ENCODE measurements at regions of chr6 and their contacts with region 1.

Region 1: DNA sequence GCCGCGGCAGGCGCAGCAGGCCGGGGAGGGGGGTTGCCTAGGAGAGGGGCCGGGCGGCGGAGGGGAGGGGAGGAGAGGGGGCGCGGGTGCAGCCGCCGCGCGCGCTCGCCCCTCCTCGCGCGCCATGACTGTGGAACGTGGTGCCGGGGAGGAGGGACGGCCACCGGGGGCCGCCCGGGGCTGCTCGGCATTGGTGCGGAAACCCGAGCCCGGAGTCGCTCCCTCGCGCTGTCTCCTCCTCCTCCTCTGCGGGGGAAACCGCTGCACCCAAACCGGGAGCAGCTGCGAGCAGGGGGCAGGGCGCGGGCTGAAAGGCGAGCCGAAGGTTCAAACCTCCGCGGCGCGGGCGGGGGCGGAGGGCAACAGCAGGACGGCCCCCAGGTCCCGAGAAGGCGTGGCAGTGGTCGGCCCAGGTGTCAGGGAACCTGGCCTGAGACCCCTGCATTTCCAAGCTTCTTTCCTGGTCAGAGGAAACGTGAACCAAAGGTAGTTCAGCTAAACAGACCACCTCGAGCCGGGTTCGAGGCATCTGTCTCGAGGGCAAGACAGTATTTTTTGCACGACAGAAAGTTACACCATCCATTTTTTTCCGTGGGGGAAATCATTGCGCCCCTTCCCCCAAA is 1.4 kb upstream of the TRERF1 start:
- DNase-seq: peak; percentile 47 to 80 (median 78)
- ATAC-seq: peak; percentile 85
- H3K4me3 ChIP-seq: peak overlapping the region; percentile 80
- H3K4me3 Mint-ChIP-seq: peak overlapping the region; percentile 84 to 100 (median 96)
- H3K27ac ChIP-seq: peak overlapping the region; percentile 56
- H3K27ac Mint-ChIP-seq: peak overlapping the region in 8 of 9 donors; percentile 11 to 93 (median 72)
- H3K4me1 ChIP-seq: peaks cover 4 to 20% of the 10 kb centered on the region in 2 donors
- H3K4me1 Mint-ChIP-seq: peaks cover 25 to 41% (median 33%) of the 10 kb centered on the region in 7 donors
- H3K27me3 ChIP-seq: no peaks in the 10 kb centered on the region
- H3K27me3 Mint-ChIP-seq: peaks cover 0 to 11% (median 0%) of the 10 kb centered on the region in 5 donors

Region 2: GRCh38 chr6:41638002-41638934 is 814.9 kb before region 1 on chr6 and contains the start of gene MDFI:
- CTCF ChIA-PET with region 1: no interaction called
- POLR2A ChIA-PET with region 1: no interaction called
- intact Hi-C with region 1: no loop called
- DNase-seq: no peak
- ATAC-seq: no peak
- H3K4me3 ChIP-seq: no peak within 1 kb of the TSS
- H3K4me3 Mint-ChIP-seq: peak within 1 kb of the TSS in 9 of 10 donors; percentile 49 to 79 (median 71)
- H3K27ac ChIP-seq: no peak within 1 kb of the TSS
- H3K27ac Mint-ChIP-seq: no peak within 1 kb of the TSS
- H3K4me1 ChIP-seq: peaks cover 3 to 10% of the 10 kb centered on the region in 2 donors
- H3K4me1 Mint-ChIP-seq: peaks cover 0 to 15% (median 10%) of the 10 kb centered on the region in 7 donors
- H3K27me3 ChIP-seq: peaks cover 0 to 7% of the 10 kb centered on the region in 2 donors
- H3K27me3 Mint-ChIP-seq: peaks cover 46 to 75% (median 59%) of the 10 kb centered on the region in 5 donors
- total RNA-seq, gene MDFI: not detected

Region 3: GRCh38 chr6:41735427-41736356 is 717.5 kb before region 1 on chr6 and contains the start of gene TFEB:
- CTCF ChIA-PET with region 1: no interaction called
- POLR2A ChIA-PET with region 1: no interaction called
- intact Hi-C with region 1: loop called in 1 of 2 experiments (anchors 2 kb)
- DNase-seq: peak; percentile 88 to 98 (median 93)
- ATAC-seq: peak; percentile 87
- H3K4me3 ChIP-seq: peak within 1 kb of the TSS; percentile 57
- H3K4me3 Mint-ChIP-seq: peak within 1 kb of the TSS; percentile 66 to 89 (median 80)
- H3K27ac ChIP-seq: peak within 1 kb of the TSS; percentile 80
- H3K27ac Mint-ChIP-seq: peak within 1 kb of the TSS in 8 of 9 donors; percentile 34 to 84 (median 62)
- H3K4me1 ChIP-seq: peaks cover 32 to 37% of the 10 kb centered on the region in 2 donors
- H3K4me1 Mint-ChIP-seq: peaks cover 13 to 32% (median 24%) of the 10 kb centered on the region in 7 donors
- H3K27me3 ChIP-seq: no peaks in the 10 kb centered on the region
- H3K27me3 Mint-ChIP-seq: no peaks in the 10 kb centered on the region
- total RNA-seq, gene TFEB: 7.4 to 39.9 (median 11.8) TPM

Region 4: DNA sequence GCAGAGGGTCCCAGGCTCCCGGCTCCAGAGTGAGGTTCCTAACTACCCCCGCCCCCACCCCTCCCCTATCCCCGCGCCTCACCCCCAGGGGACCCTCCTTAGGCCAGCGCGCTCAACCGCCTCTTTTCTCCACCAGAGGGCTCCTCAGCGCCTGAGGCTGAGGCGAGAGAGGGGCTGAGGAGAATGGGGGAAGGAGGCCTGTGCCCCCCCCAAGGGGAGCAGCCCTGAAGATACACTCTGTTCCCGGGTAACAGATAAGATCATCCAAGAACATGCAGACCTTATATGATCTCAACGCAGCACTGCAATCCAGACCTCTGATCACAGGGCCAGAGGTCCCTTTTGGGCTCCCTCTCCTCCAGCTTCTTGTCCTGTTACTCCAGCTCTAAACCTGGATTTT is 192.2 kb before region 1 on chr6:
- CTCF ChIA-PET with region 1: no interaction called
- POLR2A ChIA-PET with region 1: interaction called, 3 read pairs
- intact Hi-C with region 1: loop called (anchors 2 kb)
- DNase-seq: peak in 6 of 9 donors; percentile 11 to 42 (median 34)
- ATAC-seq: peak; percentile 71
- H3K4me3 ChIP-seq: no peak overlapping the region
- H3K4me3 Mint-ChIP-seq: no peak overlapping the region
- H3K27ac ChIP-seq: no peak overlapping the region
- H3K27ac Mint-ChIP-seq: peak overlapping the region in 2 of 9 donors; percentile 38 to 60
- H3K4me1 ChIP-seq: peaks cover 0 to 7% of the 10 kb centered on the region in 2 donors
- H3K4me1 Mint-ChIP-seq: peaks cover 0 to 14% (median 4%) of the 10 kb centered on the region in 7 donors
- H3K27me3 ChIP-seq: no peaks in the 10 kb centered on the region
- H3K27me3 Mint-ChIP-seq: no peaks in the 10 kb centered on the region

Region 5: DNA sequence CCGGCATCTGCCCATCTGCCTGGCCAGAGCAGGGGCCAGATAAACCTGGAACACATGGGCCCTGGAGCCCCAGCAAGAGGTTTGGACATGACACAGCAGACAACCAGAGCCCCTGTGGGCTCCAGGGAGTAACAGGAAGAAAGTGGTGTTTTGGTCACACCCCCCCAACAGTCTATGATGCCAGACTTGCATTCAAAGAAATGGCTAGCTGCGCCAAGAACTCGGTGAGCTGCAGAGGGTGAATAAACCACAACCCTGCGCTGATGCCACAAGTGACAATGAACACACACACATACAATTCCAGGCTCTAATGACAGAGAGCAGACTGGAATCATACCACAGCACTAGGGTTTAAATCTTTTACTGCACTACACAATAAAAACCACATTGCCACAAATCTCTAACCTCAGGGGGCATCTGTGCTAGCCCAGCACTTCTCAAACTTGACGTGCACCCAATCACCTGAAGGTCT is 35.5 kb before region 1 on chr6:
- CTCF ChIA-PET with region 1: no interaction called
- POLR2A ChIA-PET with region 1: interaction called, 21 read pairs
- intact Hi-C with region 1: loop called (anchors 2 to 5 kb)
- DNase-seq: peak in 6 of 9 donors; percentile 16 to 40 (median 30)
- ATAC-seq: peak; percentile 86
- H3K4me3 ChIP-seq: peak overlapping the region; percentile 29
- H3K4me3 Mint-ChIP-seq: peak overlapping the region in 9 of 10 donors; percentile 43 to 75 (median 62)
- H3K27ac ChIP-seq: no peak overlapping the region
- H3K27ac Mint-ChIP-seq: peak overlapping the region in 6 of 9 donors; percentile 68 to 84 (median 77)
- H3K4me1 ChIP-seq: peaks cover 26 to 29% of the 10 kb centered on the region in 2 donors
- H3K4me1 Mint-ChIP-seq: peaks cover 43 to 91% (median 75%) of the 10 kb centered on the region in 7 donors
- H3K27me3 ChIP-seq: no peaks in the 10 kb centered on the region
- H3K27me3 Mint-ChIP-seq: no peaks in the 10 kb centered on the region

Region 6: GRCh38 chr6:42440778-42441696 is 12.1 kb before region 1 on chr6:
- CTCF ChIA-PET with region 1: interaction called, 8 read pairs
- POLR2A ChIA-PET with region 1: interaction called, 46 read pairs
- intact Hi-C with region 1: loop called in 1 of 2 experiments (anchors 1 kb)
- DNase-seq: no peak
- ATAC-seq: no peak
- H3K4me3 ChIP-seq: no peak overlapping the region
- H3K4me3 Mint-ChIP-seq: peak overlapping the region in 7 of 10 donors; percentile 2 to 61 (median 54)
- H3K27ac ChIP-seq: no peak overlapping the region
- H3K27ac Mint-ChIP-seq: peak overlapping the region in 8 of 9 donors; percentile 16 to 86 (median 65)
- H3K4me1 ChIP-seq: peaks cover 32 to 35% of the 10 kb centered on the region in 2 donors
- H3K4me1 Mint-ChIP-seq: peaks cover 24 to 81% (median 68%) of the 10 kb centered on the region in 7 donors
- H3K27me3 ChIP-seq: no peaks in the 10 kb centered on the region
- H3K27me3 Mint-ChIP-seq: no peaks in the 10 kb centered on the region

Region 7: DNA sequence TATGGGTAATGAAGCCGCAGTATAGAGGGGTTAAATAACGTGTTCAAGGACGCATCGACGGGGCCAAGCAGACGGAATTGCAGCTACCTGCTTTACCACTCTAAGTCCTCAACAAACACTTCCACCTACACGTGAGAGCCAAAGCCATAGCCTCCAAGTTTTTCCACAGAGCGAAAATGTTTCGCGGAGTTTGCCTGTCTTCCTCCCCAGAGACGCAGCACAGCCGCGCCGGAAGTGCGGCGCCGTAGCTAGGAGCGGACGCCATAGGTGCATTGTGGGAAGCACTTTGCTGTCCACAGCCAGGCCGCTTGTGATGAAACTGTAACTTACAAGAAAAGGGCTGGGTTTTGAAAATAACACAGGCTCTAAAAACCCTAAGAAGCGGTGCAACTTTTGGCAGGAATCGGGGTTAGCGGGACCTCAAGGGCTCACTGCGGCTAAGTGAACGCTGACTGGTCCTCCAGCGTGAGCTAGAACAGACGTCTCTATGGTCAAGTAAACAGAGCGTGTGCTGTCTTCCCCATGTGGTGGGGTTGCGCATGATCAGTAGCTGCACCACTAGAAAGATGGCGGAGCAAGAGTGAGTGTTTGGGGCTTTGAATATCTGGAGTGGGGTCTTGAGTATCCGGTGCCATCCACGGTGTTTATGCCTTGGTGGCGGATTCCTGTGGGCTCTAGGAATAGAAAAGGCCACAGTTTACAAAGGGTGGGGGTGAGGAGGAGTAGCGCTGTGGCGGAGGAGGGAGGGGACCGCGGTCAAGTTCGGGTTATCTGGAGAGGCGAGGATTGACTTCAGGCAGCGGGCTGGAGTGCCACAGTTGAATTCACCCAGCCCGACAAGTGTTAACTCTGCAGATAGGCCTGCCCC is 426.5 kb after region 1 on chr6 and contains the start of gene RPL7L1:
- CTCF ChIA-PET with region 1: no interaction called
- POLR2A ChIA-PET with region 1: no interaction called
- intact Hi-C with region 1: loop called in 1 of 2 experiments (anchors 5 kb)
- DNase-seq: peak; percentile 70 to 93 (median 88)
- ATAC-seq: peak; percentile 95
- H3K4me3 ChIP-seq: peak within 1 kb of the TSS; percentile 82
- H3K4me3 Mint-ChIP-seq: peak within 1 kb of the TSS; percentile 93 to 99 (median 96)
- H3K27ac ChIP-seq: peak within 1 kb of the TSS; percentile 89
- H3K27ac Mint-ChIP-seq: peak within 1 kb of the TSS; percentile 98 to 100 (median 99)
- H3K4me1 ChIP-seq: peaks cover 5 to 7% of the 10 kb centered on the region in 2 donors
- H3K4me1 Mint-ChIP-seq: peaks cover 7 to 40% (median 29%) of the 10 kb centered on the region in 7 donors
- H3K27me3 ChIP-seq: no peaks in the 10 kb centered on the region
- H3K27me3 Mint-ChIP-seq: no peaks in the 10 kb centered on the region
- total RNA-seq, gene RPL7L1: 65.6 to 91.7 (median 78.1) TPM